ENCODE measurements at regions of chr9 and their contacts with region 1.

Region 1: DNA sequence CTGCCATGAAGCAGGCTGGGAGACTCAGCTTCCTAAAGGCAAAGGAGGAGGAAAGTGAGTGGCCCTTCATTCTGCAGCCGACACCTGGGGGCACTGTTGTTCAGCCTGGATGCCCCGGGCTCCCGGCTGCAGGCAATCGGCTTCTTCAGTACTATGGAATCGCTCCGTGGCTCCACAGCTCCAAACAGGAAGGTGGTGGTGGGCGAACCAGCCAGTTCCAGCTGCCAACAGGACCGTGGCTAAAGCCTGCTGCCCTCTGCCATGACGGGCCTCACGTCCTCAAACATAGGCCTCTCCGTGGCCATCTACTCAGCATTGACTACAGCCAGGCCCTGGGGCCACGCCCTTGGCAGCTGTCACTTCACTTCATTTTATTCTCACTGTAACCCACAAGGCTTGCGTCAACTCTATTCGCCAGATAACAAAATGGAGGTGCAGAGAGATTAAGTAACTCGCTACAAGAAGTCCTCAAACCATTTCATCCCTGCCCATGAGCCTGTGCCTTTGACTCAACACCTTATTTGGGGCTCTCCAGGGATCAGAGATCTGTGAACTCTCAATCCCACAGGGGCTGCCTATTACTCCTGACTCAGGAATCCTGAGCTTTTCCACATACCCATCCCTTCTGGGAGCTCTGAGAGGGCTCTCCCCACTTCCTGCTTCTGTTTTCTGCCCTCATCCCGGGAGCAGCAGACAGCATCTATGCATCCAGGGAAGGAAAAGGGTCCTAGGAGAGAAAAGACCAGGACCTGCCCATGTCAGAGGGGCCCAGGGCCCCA is 38.0 kb downstream of the PAX5 start:
- DNase-seq: peak; percentile 17
- H3K4me3 Mint-ChIP-seq: peak overlapping the region; percentile 40
- H3K27ac Mint-ChIP-seq: no peak overlapping the region
- H3K4me1 Mint-ChIP-seq: no peaks in the 10 kb centered on the region
- H3K27me3 Mint-ChIP-seq: peaks cover 21% of the 10 kb centered on the region

Region 2: GRCh38 chr9:36357639-36358038 is 638.5 kb before region 1 on chr9:
- intact Hi-C with region 1: no loop called
- DNase-seq: no peak
- H3K4me3 Mint-ChIP-seq: no peak overlapping the region
- H3K27ac Mint-ChIP-seq: no peak overlapping the region
- H3K4me1 Mint-ChIP-seq: no peaks in the 10 kb centered on the region
- H3K27me3 Mint-ChIP-seq: no peaks in the 10 kb centered on the region

Region 3: DNA sequence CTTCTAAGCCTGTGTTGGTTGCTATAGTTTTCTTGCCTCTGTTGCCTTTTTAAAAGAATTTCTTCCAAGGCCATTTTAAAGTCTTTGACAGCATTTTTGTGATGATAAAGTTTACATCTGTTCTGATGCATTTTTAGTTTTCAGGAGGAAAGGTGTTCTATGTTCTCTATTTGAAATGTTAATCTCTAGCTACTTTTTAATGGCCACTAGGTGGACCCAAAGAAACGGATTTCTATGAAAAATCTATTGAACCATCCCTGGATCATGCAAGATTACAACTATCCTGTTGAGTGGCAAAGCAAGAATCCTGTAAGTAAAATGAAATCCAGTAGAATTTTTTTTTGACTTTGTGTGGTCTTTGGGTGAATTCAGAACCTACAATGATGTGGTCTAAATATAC is 363.2 kb before region 1 on chr9:
- intact Hi-C with region 1: loop called (anchors 5 kb)
- DNase-seq: no peak
- H3K4me3 Mint-ChIP-seq: no peak overlapping the region
- H3K27ac Mint-ChIP-seq: no peak overlapping the region
- H3K4me1 Mint-ChIP-seq: no peaks in the 10 kb centered on the region
- H3K27me3 Mint-ChIP-seq: no peaks in the 10 kb centered on the region

Region 4: GRCh38 chr9:36873247-36873875 is 122.8 kb before region 1 on chr9:
- intact Hi-C with region 1: loop called (anchors 1 kb)
- DNase-seq: peak; percentile 50
- H3K4me3 Mint-ChIP-seq: no peak overlapping the region
- H3K27ac Mint-ChIP-seq: no peak overlapping the region
- H3K4me1 Mint-ChIP-seq: no peaks in the 10 kb centered on the region
- H3K27me3 Mint-ChIP-seq: peaks cover 11% of the 10 kb centered on the region

Region 5: GRCh38 chr9:36924071-36924470 is 72.0 kb before region 1 on chr9:
- intact Hi-C with region 1: loop called (anchors 2 kb)
- DNase-seq: peak; percentile 12
- H3K4me3 Mint-ChIP-seq: no peak overlapping the region
- H3K27ac Mint-ChIP-seq: peak overlapping the region; percentile 77
- H3K4me1 Mint-ChIP-seq: peaks cover 58% of the 10 kb centered on the region
- H3K27me3 Mint-ChIP-seq: no peaks in the 10 kb centered on the region

Region 6: GRCh38 chr9:37010180-37010579 is 14.1 kb after region 1 on chr9:
- intact Hi-C with region 1: no loop called
- DNase-seq: no peak
- H3K4me3 Mint-ChIP-seq: no peak overlapping the region
- H3K27ac Mint-ChIP-seq: no peak overlapping the region
- H3K4me1 Mint-ChIP-seq: no peaks in the 10 kb centered on the region
- H3K27me3 Mint-ChIP-seq: peaks cover 51% of the 10 kb centered on the region

Region 7: DNA sequence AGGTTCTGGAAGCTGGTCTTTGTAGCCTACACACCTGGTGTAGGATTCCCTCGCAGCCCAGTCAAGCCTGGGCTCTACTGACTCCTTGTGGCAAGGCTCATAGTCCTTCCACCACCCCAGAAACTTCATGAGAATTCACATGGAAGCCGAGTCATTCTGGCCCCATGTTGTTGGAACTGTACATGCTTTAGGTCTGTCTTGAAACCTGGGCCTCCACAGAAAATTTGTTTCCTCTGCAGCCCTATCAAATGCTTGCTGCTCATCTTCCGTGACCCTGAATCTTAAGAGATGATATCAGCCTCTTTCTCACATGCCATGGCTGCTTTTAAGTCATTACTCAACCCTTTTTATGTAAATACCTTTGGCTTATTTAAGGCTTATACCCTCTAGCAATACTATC is 313.0 kb after region 1 on chr9:
- intact Hi-C with region 1: loop called (anchors 1 kb)
- DNase-seq: no peak
- H3K4me3 Mint-ChIP-seq: no peak overlapping the region
- H3K27ac Mint-ChIP-seq: no peak overlapping the region
- H3K4me1 Mint-ChIP-seq: peaks cover 5% of the 10 kb centered on the region
- H3K27me3 Mint-ChIP-seq: no peaks in the 10 kb centered on the region

Region 8: DNA sequence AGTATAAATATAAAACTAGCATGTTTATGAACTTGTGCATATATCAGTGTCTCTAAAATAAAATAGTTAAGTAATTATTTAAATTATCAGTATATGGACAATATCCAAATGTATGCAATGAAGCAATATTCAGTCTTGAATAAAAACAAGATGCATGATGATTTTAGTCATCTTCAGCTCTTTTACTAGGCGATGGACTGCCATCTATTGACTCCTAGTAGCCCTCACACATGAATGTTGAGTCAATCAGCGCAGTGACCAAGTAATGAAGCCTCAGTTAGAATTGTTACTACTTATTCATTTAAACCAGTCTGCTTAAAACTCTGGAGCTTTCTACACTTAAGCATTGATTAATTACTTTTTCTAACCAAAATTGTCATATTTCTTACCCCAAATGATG is 333.5 kb after region 1 on chr9:
- intact Hi-C with region 1: loop called (anchors 1 kb)
- DNase-seq: no peak
- H3K4me3 Mint-ChIP-seq: no peak overlapping the region
- H3K27ac Mint-ChIP-seq: no peak overlapping the region
- H3K4me1 Mint-ChIP-seq: peaks cover 4% of the 10 kb centered on the region
- H3K27me3 Mint-ChIP-seq: no peaks in the 10 kb centered on the region

Region 9: DNA sequence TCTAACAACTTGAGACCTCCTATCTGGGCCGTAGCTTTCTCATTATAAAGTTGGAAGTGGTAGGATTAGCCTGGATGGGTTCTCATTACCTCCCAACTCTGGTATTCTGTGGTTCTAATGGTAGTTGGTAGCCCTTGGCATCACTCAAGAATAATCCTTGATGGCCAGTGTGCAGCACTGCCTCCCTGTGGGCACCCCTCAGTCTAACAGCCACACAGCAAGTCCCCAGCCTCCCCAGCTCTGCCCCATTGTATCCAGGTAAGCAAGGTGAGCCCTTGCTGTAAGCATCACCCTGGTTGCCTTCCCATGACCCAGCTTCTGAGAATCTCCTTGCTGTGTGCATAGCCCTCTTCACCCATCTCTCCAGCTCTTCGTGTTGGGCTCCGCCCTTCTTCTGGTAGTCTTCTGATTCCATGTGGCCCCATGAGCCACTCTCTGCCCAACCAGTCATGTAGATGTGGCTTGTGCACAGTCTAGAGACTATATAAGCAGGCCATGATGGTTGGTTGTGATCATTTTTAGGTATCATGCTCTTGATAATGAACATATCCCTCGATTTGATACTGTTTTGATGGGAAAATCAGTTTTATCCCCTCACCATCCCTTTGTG is 368.7 kb after region 1 on chr9:
- intact Hi-C with region 1: loop called (anchors 1 kb)
- DNase-seq: no peak
- H3K4me3 Mint-ChIP-seq: no peak overlapping the region
- H3K27ac Mint-ChIP-seq: no peak overlapping the region
- H3K4me1 Mint-ChIP-seq: no peaks in the 10 kb centered on the region
- H3K27me3 Mint-ChIP-seq: no peaks in the 10 kb centered on the region